Calu3 (cell line): ENCODE measurements at regions of chr3 and their contacts with region 1.

Region 1: DNA sequence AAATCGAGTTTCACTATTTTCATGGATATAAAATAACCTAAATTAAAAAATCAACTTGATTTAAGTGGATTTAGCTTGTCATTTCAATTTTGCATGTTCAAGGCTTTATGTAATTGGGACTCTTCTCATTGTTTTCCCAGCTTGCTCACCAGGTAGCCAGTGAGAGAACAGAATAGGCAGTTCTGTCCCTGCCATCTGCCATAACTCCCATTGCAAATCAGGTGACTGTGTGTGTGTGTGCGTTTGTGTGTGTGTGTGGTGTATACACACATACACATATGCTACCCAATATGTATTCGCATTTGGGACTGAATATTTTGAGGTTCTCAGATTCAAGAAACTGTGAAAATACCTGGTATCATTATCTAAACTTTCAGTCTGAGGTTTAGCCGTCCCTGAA is 1069.8 kb downstream of the IGSF11 start:
- DNase-seq: no peak
- H3K4me3 Mint-ChIP-seq: no peak overlapping the region
- H3K27ac Mint-ChIP-seq: no peak overlapping the region
- H3K4me1 Mint-ChIP-seq: no peaks in the 10 kb centered on the region
- H3K27me3 Mint-ChIP-seq: no peaks in the 10 kb centered on the region
- CTCF ChIP-seq: no peak

Region 2: DNA sequence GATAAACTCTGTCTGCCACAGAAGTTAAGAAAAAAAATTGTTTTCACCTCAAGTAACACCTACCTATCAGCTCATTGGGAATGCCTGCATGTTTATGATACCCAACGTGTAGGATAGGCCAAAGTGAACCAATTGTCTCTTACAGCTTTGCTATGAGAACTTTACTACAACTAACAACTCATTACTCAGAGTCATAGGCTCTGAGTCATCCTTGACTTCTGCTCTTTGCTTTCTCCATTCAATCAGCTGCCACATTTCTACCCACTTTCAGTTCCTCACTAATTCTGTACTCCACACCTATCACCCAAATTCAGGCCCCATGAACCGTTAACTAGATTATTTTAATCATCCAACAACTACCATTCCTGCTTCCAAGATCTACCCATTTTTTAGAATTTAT is 411.4 kb before region 1 on chr3:
- CTCF ChIA-PET with region 1: no interaction called
- intact Hi-C with region 1: no loop called
- DNase-seq: no peak
- H3K4me3 Mint-ChIP-seq: no peak overlapping the region
- H3K27ac Mint-ChIP-seq: peak overlapping the region; percentile 50
- H3K4me1 Mint-ChIP-seq: peaks cover 27% of the 10 kb centered on the region
- H3K27me3 Mint-ChIP-seq: no peaks in the 10 kb centered on the region
- CTCF ChIP-seq: no peak

Region 3: GRCh38 chr3:117989982-117990381 is 25.2 kb after region 1 on chr3:
- CTCF ChIA-PET with region 1: no interaction called
- intact Hi-C with region 1: loop called (anchors 1 kb)
- DNase-seq: no peak
- H3K4me3 Mint-ChIP-seq: no peak overlapping the region
- H3K27ac Mint-ChIP-seq: no peak overlapping the region
- H3K4me1 Mint-ChIP-seq: no peaks in the 10 kb centered on the region
- H3K27me3 Mint-ChIP-seq: no peaks in the 10 kb centered on the region
- CTCF ChIP-seq: no peak